Heart left ventricle (tissue), 16 donors: ENCODE measurements at regions of chr17 and their contacts with region 1.

Region 1: DNA sequence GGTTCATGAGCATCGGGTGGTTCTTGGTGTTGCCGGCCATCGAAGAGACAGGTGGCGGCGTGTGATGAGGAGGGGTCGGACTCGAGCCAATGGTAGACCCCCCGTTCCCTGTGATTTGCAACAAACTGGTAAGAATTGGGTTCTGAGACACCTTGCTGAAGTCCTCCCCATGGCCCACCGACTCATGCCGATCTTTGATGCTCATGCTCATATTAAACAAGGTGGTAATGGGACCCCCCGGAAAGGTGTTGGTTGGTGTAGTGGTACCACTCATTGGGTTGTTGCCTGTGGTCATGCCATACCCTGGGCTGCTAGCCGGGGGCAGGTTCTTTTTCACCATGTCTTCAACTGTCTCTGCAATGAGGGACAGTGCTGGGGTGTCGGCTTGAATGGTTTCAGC is 8.9 kb upstream of the FBXL20 start:
- DNase-seq: no peak
- ATAC-seq: no peak
- H3K4me3 ChIP-seq: no peak overlapping the region
- H3K27ac ChIP-seq: no peak overlapping the region
- H3K4me1 ChIP-seq: peaks cover 0 to 9% (median 0%) of the 10 kb centered on the region in 12 donors
- H3K27me3 ChIP-seq: no peaks in the 10 kb centered on the region
- CTCF ChIP-seq: no peak
- POLR2A ChIP-seq: no peak

Region 2: DNA sequence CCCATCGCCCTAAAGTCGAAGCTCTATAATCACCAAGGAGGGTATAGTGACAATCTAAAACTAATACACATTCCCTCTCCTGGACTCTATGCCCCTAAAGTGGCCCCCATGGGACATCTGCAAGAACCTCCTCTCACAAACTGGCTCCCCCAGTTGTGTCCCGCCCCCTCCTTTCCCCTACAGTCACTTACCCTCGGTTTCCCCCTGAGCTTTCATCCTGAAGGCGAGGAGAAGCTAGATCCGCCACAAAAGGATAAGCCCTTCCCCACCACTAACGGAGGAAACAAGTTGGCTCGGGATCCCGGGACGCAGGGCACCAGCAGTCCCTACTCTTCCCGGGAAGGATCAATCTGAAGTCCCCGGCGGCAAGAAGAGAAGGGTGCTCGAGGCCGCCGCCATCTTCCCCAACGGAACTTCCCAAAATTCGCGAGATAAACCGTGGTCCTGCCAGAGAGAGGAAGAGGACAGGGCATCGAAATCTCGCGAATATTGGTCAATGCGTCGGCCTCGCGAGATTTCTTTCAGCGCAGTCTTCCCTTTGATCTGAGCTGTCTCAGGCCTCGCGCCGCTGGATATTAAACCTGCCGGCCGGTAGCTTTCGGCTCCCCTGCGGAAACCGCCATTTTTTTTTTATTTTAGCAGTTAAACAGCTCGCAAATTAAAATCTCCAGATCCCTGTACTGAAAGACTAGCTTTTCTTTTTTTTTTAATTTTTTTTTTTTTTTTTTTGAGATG is 40.7 kb after region 1 on chr17 and contains the start of gene MED1:
- intact Hi-C with region 1: no loop called
- DNase-seq: peak; percentile 94 to 96 (median 95)
- ATAC-seq: peak; percentile 98 to 99 (median 99)
- H3K4me3 ChIP-seq: peak within 1 kb of the TSS; percentile 64 to 94 (median 83)
- H3K27ac ChIP-seq: peak within 1 kb of the TSS; percentile 66 to 91 (median 83)
- H3K4me1 ChIP-seq: peaks cover 0 to 29% (median 12%) of the 10 kb centered on the region in 12 donors
- H3K27me3 ChIP-seq: no peaks in the 10 kb centered on the region
- CTCF ChIP-seq: no peak
- POLR2A ChIP-seq: peak in 1 of 2 donors; percentile 61
- total RNA-seq, gene MED1: 18.0 to 29.4 (median 20.8) TPM

Region 3: GRCh38 chr17:39508987-39509386 is 98.7 kb after region 1 on chr17:
- intact Hi-C with region 1: loop called in 1 of 10 experiments (anchors 10 kb)
- DNase-seq: no peak
- ATAC-seq: no peak
- H3K4me3 ChIP-seq: no peak overlapping the region
- H3K27ac ChIP-seq: no peak overlapping the region
- H3K4me1 ChIP-seq: no peaks in the 10 kb centered on the region
- H3K27me3 ChIP-seq: no peaks in the 10 kb centered on the region
- CTCF ChIP-seq: no peak
- POLR2A ChIP-seq: no peak

Region 4: DNA sequence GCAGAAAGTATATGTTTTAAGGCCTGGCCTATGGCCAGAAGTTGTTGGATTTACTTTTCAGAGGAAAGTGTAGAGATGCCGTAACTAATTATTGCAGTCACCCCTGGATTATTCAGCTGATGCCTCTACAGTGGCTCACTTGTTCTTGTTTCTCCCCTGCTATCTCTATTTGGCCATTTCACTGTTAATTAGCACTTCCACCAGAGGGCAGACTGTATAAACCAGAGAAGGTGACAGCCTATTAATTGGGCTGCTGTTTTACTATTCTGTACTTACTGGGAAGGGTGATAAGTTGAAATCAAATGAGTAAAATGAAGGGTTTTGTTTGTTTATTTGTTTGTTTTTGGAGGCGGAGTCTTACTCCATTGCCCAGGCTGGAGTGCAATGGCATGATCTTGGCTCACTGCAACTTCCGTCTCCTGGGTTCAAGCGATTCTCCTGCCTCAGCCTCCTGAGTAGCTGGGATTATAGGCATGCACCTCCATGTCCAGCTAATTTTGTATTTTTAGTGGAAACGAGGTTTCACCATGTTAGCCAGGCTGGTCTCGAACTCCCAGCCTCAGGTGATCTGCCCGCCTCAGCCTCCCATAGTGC is 117.0 kb after region 1 on chr17:
- intact Hi-C with region 1: no loop called
- DNase-seq: no peak
- ATAC-seq: peak in 2 of 4 donors; percentile 36 to 49
- H3K4me3 ChIP-seq: no peak overlapping the region
- H3K27ac ChIP-seq: no peak overlapping the region
- H3K4me1 ChIP-seq: peaks cover 0 to 14% (median under 1%) of the 10 kb centered on the region in 12 donors
- H3K27me3 ChIP-seq: no peaks in the 10 kb centered on the region
- CTCF ChIP-seq: peak; percentile 19 to 58 (median 40)
- POLR2A ChIP-seq: no peak